ENCODE measurements at regions of chr1 and their contacts with region 1.

Region 1: GRCh38 chr1:3618881-3619671 is 5.7 kb upstream of the TPRG1L start:
- DNase-seq: peak; percentile 51 to 88 (median 79)
- ATAC-seq: peak; percentile 97
- H3K4me3 ChIP-seq: no peak overlapping the region
- H3K4me3 Mint-ChIP-seq: no peak overlapping the region
- H3K27ac ChIP-seq: no peak overlapping the region
- H3K27ac Mint-ChIP-seq: peak overlapping the region; percentile 21
- H3K4me1 ChIP-seq: peaks cover 22% of the 10 kb centered on the region
- H3K4me1 Mint-ChIP-seq: peaks cover 34% of the 10 kb centered on the region
- H3K27me3 ChIP-seq: peaks cover 0 to 2% of the 10 kb centered on the region in 2 experiments
- H3K27me3 Mint-ChIP-seq: peaks cover 2% of the 10 kb centered on the region
- CTCF ChIP-seq: peak; percentile 81

Region 2: DNA sequence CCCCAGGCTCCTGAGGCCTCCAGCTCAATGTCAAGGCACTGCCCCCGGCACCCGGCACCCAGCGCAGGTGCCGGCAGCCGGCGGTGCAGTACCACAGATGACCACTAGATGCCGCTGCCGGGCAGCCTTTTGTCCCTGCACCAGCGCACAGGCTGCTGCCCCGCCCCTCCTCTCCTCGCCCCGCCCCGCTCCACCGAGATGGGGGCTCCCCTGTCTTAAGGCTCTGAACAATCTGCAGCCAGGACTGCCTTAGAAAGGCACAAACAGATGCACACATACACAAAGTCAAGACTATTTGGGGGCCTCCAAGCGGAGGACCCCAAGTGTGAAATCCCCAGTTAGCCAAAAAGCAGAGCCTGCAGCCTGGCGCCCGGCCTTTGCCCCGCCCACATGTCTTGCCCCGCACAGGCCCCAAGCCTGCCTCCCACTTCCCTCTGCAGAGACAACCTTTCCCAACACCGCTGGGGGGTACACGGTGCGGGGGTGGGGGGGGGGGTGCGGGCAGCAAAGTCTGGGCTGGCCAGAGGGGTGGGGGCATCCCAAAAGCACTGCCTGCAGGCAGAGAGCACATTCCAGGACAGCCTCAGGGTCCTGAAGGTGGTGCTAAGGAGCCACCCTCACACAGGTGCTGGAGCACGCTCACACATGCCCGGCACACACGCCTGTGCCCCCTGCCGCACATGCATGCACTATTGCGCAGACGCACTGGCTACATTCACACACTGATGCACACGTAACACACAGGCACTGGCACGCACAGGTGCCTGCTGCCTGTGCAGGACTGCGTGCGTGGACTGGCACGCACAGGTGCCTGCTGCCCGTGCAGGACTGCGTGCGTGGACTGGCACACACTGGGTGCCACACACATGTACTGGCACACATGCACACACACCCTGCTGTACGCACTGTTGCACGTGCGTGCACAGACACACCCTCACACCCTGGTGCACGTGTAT is 127.5 kb before region 1 on chr1:
- CTCF ChIA-PET with region 1: interaction called, 25 read pairs
- POLR2A ChIA-PET with region 1: interaction called, 4 read pairs
- intact Hi-C with region 1: loop called in 1 of 2 experiments (anchors 1 kb)
- DNase-seq: peak; percentile 80 to 92 (median 86)
- ATAC-seq: peak; percentile 100
- H3K4me3 ChIP-seq: no peak overlapping the region
- H3K4me3 Mint-ChIP-seq: peak overlapping the region; percentile 45
- H3K27ac ChIP-seq: no peak overlapping the region
- H3K27ac Mint-ChIP-seq: no peak overlapping the region
- H3K4me1 ChIP-seq: no peaks in the 10 kb centered on the region
- H3K4me1 Mint-ChIP-seq: peaks cover 5% of the 10 kb centered on the region
- H3K27me3 ChIP-seq: no peaks in the 10 kb centered on the region
- H3K27me3 Mint-ChIP-seq: no peaks in the 10 kb centered on the region
- CTCF ChIP-seq: peak; percentile 99

Region 3: GRCh38 chr1:3564921-3565827 is 53.9 kb before region 1 on chr1:
- CTCF ChIA-PET with region 1: interaction called, 59 read pairs
- POLR2A ChIA-PET with region 1: interaction called, 3 read pairs
- intact Hi-C with region 1: loop called in 1 of 2 experiments (anchors 1 kb)
- DNase-seq: peak in 8 of 9 experiments; percentile 11 to 68 (median 38)
- ATAC-seq: peak; percentile 71
- H3K4me3 ChIP-seq: no peak overlapping the region
- H3K4me3 Mint-ChIP-seq: no peak overlapping the region
- H3K27ac ChIP-seq: no peak overlapping the region
- H3K27ac Mint-ChIP-seq: no peak overlapping the region
- H3K4me1 ChIP-seq: no peaks in the 10 kb centered on the region
- H3K4me1 Mint-ChIP-seq: no peaks in the 10 kb centered on the region
- H3K27me3 ChIP-seq: no peaks in the 10 kb centered on the region
- H3K27me3 Mint-ChIP-seq: no peaks in the 10 kb centered on the region
- CTCF ChIP-seq: peak; percentile 82

Region 4: DNA sequence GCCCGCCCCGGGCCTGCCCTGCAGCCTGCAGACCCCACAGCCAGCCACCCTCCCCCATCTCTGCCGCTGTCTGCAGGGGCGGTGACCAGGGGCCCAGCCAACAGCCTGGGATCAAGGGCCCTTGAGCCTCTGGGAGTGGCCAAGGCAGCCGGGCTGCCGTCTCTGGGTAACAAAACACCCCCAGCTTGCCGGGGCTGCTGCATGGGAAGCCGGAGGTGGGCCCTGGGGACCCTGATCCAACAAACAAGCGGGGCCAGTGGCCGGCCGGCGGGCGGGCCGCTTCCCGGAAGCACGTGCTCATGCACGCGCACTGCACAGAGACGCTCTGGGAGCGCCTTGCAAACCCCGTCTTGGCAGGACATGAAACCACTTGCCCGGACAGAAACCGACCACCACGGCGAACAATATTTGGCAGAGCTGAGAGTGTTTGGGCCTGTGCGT is 21.0 kb before region 1 on chr1:
- CTCF ChIA-PET with region 1: interaction called, 13 read pairs
- POLR2A ChIA-PET with region 1: no interaction called
- intact Hi-C with region 1: no loop called
- DNase-seq: peak in 1 of 9 experiments; percentile 64
- ATAC-seq: peak; percentile 18
- H3K4me3 ChIP-seq: peak overlapping the region; percentile 14 to 48
- H3K4me3 Mint-ChIP-seq: peak overlapping the region; percentile 83
- H3K27ac ChIP-seq: no peak overlapping the region
- H3K27ac Mint-ChIP-seq: peak overlapping the region; percentile 90
- H3K4me1 ChIP-seq: peaks cover 39% of the 10 kb centered on the region
- H3K4me1 Mint-ChIP-seq: peaks cover 26% of the 10 kb centered on the region
- H3K27me3 ChIP-seq: no peaks in the 10 kb centered on the region
- H3K27me3 Mint-ChIP-seq: no peaks in the 10 kb centered on the region
- CTCF ChIP-seq: no peak

Measured in CD8-positive, alpha-beta T cell (primary cell).